ENCODE measurements at regions of chr19 and their contacts with region 1.

Region 1: DNA sequence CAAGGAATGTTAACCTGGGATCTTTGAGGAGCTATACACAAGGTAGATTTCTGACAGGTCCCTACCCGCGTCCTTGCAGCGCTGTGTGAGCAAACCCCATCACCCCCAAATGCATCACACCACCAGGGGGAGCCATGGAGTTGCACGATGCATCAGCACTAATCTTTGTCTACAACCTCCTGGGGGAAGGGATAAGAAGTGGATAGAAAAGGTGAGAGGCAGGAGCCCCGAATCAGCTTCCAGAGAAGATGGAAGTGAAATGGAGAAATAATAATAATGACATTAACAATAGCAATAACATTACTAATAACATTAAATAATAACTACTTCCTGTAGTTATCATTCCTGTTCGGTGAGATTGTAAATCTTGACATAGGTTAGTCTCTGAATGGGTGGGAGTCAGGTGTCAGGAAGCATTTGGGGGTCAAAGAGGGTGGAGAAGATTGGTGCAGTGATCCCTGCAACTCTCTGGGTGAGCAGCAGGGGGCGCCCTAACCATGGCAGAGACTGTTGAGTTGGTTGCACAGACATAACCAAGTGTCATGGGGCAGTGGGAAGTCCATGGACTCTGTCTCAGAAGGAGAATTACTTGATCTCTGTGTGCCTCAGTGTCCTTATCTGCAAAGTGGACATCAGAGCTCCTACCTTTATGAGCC is 16.5 kb downstream of the SIGLEC7 start:
- DNase-seq: peak; percentile 49 to 66 (median 53)
- H3K4me3 ChIP-seq: no peak overlapping the region
- H3K4me3 Mint-ChIP-seq: peak overlapping the region in 1 of 8 donors; percentile 18
- H3K27ac ChIP-seq: no peak overlapping the region
- H3K27ac Mint-ChIP-seq: peak overlapping the region in 1 of 7 donors; percentile 60
- H3K4me1 ChIP-seq: peaks cover 5% of the 10 kb centered on the region
- H3K4me1 Mint-ChIP-seq: peaks cover 6 to 8% (median 8%) of the 10 kb centered on the region in 4 donors
- H3K27me3 ChIP-seq: no peaks in the 10 kb centered on the region
- H3K27me3 Mint-ChIP-seq: peaks cover 2 to 7% of the 10 kb centered on the region in 2 donors

Region 2: DNA sequence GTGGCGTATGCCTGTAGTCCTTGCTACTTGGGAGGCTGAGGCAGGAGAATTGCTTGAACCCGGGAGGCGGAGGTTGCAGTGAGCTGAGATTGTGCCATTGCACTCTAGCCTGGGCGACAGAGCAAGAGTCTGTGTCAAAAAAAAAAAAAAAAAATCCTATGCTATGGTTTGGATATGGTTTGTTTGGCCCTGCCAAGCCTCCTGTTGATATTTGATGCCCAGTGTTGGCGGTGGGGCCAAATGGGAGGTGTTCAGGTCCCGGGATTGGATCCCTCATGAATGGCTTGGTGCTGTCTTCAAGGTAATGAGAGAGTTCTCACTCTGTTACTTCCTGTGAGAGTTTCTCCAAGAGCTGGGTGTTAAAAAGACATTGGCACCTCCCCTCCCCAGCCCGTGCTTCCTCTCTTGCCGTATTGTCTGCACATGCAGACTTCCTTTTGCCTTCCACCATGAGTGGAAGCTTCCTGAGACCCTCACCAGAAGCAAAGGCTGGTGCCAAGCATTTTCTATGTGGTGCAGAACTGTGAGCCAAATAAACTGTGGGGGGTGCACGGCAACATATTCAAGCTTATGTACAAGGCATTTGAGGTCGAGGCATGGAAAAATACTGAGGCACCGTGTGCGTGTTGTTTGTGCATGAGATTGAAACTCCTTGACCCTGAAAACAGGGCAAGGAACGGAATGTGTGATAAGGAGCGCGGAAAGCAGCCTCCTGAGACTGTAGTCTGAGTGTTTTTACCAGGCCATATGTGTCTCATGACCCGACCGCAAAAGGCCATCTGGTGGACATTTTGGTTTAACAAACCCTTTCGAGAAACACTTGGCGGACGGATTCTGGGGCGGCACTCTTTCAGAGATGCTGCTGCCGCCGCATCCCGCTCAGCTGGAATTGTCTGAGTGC is 26.6 kb before region 1 on chr19:
- CTCF ChIA-PET with region 1: interaction called, 45 read pairs
- POLR2A ChIA-PET with region 1: no interaction called
- intact Hi-C with region 1: no loop called
- DNase-seq: peak in 4 of 5 donors; percentile 27 to 37 (median 32)
- H3K4me3 ChIP-seq: peak overlapping the region in 1 of 2 donors; percentile 32
- H3K4me3 Mint-ChIP-seq: peak overlapping the region; percentile 67 to 93 (median 82)
- H3K27ac ChIP-seq: no peak overlapping the region
- H3K27ac Mint-ChIP-seq: peak overlapping the region; percentile 47 to 89 (median 87)
- H3K4me1 ChIP-seq: peaks cover 59% of the 10 kb centered on the region
- H3K4me1 Mint-ChIP-seq: peaks cover 27 to 62% (median 43%) of the 10 kb centered on the region in 4 donors
- H3K27me3 ChIP-seq: no peaks in the 10 kb centered on the region
- H3K27me3 Mint-ChIP-seq: no peaks in the 10 kb centered on the region

Region 3: GRCh38 chr19:51147663-51148062 is 10.9 kb before region 1 on chr19:
- CTCF ChIA-PET with region 1: interaction called, 12 read pairs
- POLR2A ChIA-PET with region 1: no interaction called
- intact Hi-C with region 1: no loop called
- DNase-seq: no peak
- H3K4me3 ChIP-seq: no peak overlapping the region
- H3K4me3 Mint-ChIP-seq: no peak overlapping the region
- H3K27ac ChIP-seq: no peak overlapping the region
- H3K27ac Mint-ChIP-seq: peak overlapping the region in 3 of 7 donors; percentile 4 to 74 (median 47)
- H3K4me1 ChIP-seq: no peaks in the 10 kb centered on the region
- H3K4me1 Mint-ChIP-seq: peaks cover 0 to 5% (median 2%) of the 10 kb centered on the region in 4 donors
- H3K27me3 ChIP-seq: no peaks in the 10 kb centered on the region
- H3K27me3 Mint-ChIP-seq: peaks cover 2 to 5% of the 10 kb centered on the region in 2 donors

Region 4: DNA sequence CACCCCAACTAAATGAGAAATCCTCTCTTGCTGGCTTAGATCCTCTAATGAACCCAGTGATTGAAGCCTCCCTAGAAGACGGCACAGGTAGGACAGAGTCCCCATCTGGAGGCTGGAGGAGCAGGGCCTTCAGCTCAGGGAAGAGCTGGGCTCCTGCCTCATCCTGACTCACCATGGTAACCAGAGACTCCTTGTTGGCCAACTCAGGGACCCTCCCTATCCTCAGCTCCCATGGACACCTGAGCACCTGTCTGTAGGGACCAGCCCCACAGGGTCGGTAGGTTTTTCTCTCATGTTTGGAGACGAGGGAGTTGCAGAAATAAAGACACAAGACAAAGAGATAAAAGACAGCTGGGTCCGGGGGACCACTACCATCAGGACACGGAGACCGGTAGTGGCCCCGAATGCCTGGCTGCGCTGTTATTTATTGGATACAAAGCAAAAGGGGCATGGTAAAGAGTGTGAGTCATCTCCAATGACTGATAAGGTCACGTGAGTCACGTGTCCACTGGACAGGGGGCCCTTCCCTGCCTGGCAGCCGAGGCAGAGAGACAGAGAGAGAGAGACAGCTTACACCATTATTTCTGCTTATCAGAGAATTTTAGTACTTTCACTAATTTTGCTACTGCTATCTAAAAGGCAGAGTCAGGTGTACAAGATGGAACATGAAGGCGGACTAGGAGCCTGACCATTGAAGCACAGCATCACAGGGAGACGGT is 10.1 kb after region 1 on chr19:
- CTCF ChIA-PET with region 1: interaction called, 26 read pairs
- POLR2A ChIA-PET with region 1: no interaction called
- intact Hi-C with region 1: loop called (anchors 1 kb)
- DNase-seq: peak in 1 of 5 donors; percentile 4
- H3K4me3 ChIP-seq: no peak overlapping the region
- H3K4me3 Mint-ChIP-seq: no peak overlapping the region
- H3K27ac ChIP-seq: no peak overlapping the region
- H3K27ac Mint-ChIP-seq: peak overlapping the region in 1 of 7 donors; percentile 29
- H3K4me1 ChIP-seq: peaks cover 20% of the 10 kb centered on the region
- H3K4me1 Mint-ChIP-seq: peaks cover 5 to 25% (median 15%) of the 10 kb centered on the region in 4 donors
- H3K27me3 ChIP-seq: peaks cover 7% of the 10 kb centered on the region
- H3K27me3 Mint-ChIP-seq: peaks cover 0 to 4% of the 10 kb centered on the region in 2 donors

Region 5: GRCh38 chr19:51183629-51184028 is 25.0 kb after region 1 on chr19:
- CTCF ChIA-PET with region 1: no interaction called
- POLR2A ChIA-PET with region 1: no interaction called
- intact Hi-C with region 1: no loop called
- DNase-seq: no peak
- H3K4me3 ChIP-seq: no peak overlapping the region
- H3K4me3 Mint-ChIP-seq: no peak overlapping the region
- H3K27ac ChIP-seq: no peak overlapping the region
- H3K27ac Mint-ChIP-seq: no peak overlapping the region
- H3K4me1 ChIP-seq: no peaks in the 10 kb centered on the region
- H3K4me1 Mint-ChIP-seq: peaks cover 0 to 9% (median 4%) of the 10 kb centered on the region in 4 donors
- H3K27me3 ChIP-seq: no peaks in the 10 kb centered on the region
- H3K27me3 Mint-ChIP-seq: peaks cover 15% of the 10 kb centered on the region in 2 donors

Region 6: GRCh38 chr19:51259348-51260245 is 101.0 kb after region 1 on chr19:
- CTCF ChIA-PET with region 1: interaction called, 3 read pairs
- POLR2A ChIA-PET with region 1: interaction called, 3 read pairs
- intact Hi-C with region 1: loop called (anchors 1 kb)
- DNase-seq: peak in 4 of 5 donors; percentile 1 to 15 (median 5)
- H3K4me3 ChIP-seq: no peak overlapping the region
- H3K4me3 Mint-ChIP-seq: no peak overlapping the region
- H3K27ac ChIP-seq: no peak overlapping the region
- H3K27ac Mint-ChIP-seq: no peak overlapping the region
- H3K4me1 ChIP-seq: peaks cover 6% of the 10 kb centered on the region
- H3K4me1 Mint-ChIP-seq: peaks cover 2 to 18% (median 12%) of the 10 kb centered on the region in 4 donors
- H3K27me3 ChIP-seq: no peaks in the 10 kb centered on the region
- H3K27me3 Mint-ChIP-seq: peaks cover 8 to 12% of the 10 kb centered on the region in 2 donors

Region 7: DNA sequence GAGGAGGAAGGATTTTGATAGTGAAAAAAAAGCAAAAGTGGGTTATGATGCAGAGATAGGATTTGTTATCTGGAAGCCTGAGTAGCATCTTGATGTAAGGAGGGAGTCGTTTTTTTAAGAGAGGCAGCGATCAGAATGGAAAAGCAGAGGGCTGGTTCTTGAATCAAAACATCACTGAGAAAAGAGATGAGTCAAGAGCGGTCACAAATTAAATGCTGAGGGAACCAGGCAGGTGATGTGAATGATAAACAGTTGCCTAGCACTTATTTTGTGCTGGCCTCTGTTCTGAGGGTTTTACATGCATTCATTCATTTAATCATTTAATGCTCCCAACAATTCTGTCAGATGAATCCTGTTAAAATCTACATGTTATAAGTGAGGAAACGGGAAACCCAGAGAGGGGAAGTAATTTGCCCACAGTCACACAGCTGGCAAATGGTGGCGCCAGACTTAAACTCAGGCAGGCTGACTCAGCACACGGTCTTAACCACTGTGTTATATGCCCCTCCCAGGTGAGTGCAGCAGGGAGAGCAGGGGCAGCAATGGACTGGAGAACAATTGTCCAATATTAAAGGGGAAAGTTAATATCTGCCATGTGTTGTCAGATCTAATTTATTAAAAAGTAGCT is 113.7 kb after region 1 on chr19:
- CTCF ChIA-PET with region 1: no interaction called
- POLR2A ChIA-PET with region 1: no interaction called
- intact Hi-C with region 1: no loop called
- DNase-seq: peak in 2 of 5 donors; percentile 28 to 51
- H3K4me3 ChIP-seq: no peak overlapping the region
- H3K4me3 Mint-ChIP-seq: peak overlapping the region in 5 of 8 donors; percentile 23 to 67 (median 41)
- H3K27ac ChIP-seq: no peak overlapping the region
- H3K27ac Mint-ChIP-seq: peak overlapping the region in 5 of 7 donors; percentile 58 to 92 (median 82)
- H3K4me1 ChIP-seq: no peaks in the 10 kb centered on the region
- H3K4me1 Mint-ChIP-seq: peaks cover 0 to 35% (median 20%) of the 10 kb centered on the region in 4 donors
- H3K27me3 ChIP-seq: no peaks in the 10 kb centered on the region
- H3K27me3 Mint-ChIP-seq: peaks cover 0 to 2% of the 10 kb centered on the region in 2 donors

Region 8: GRCh38 chr19:51524666-51525214 is 366.1 kb after region 1 on chr19:
- CTCF ChIA-PET with region 1: no interaction called
- POLR2A ChIA-PET with region 1: no interaction called
- intact Hi-C with region 1: no loop called
- DNase-seq: no peak
- H3K4me3 ChIP-seq: no peak overlapping the region
- H3K4me3 Mint-ChIP-seq: no peak overlapping the region
- H3K27ac ChIP-seq: no peak overlapping the region
- H3K27ac Mint-ChIP-seq: no peak overlapping the region
- H3K4me1 ChIP-seq: no peaks in the 10 kb centered on the region
- H3K4me1 Mint-ChIP-seq: no peaks in the 10 kb centered on the region
- H3K27me3 ChIP-seq: peaks cover 3% of the 10 kb centered on the region
- H3K27me3 Mint-ChIP-seq: peaks cover 11 to 32% of the 10 kb centered on the region in 2 donors

Measured in CD4-positive, alpha-beta memory T cell (primary cell).